ENCODE measurements at regions of chr6 and their contacts with region 1.

Region 1: GRCh38 chr6:90049295-90049694 is 155.0 kb downstream of the GJA10 start:
- DNase-seq: no peak
- H3K4me3 Mint-ChIP-seq: no peak overlapping the region
- H3K27ac Mint-ChIP-seq: peak overlapping the region; percentile 76
- H3K4me1 Mint-ChIP-seq: peaks cover 26% of the 10 kb centered on the region
- H3K27me3 Mint-ChIP-seq: no peaks in the 10 kb centered on the region

Region 2: DNA sequence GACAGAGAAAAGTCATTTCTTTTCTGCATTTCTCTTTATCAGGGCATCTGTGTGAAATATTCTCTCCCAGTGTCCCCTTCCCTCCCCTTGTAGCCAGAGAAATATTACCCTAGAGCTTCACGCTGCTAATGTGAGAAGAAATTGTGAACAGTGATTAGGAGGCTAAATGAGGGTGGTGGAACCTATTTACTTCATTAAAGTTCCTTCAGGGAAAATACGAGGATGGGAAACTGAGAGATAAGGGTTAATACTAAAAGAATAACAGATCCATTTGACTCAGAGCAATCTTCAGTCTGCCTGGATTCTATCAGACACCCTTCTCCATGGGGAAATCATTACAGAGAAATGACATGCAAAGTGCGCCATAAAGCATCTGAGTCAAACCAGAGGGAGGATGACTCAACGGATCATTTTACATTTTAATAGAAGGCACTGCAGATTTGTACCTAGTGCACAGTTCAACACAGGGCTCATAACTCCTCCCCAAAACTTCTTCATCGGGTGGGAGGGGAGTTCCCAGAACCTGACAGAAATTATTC is 23.7 kb before region 1 on chr6:
- intact Hi-C with region 1: loop called (anchors 1 kb)
- DNase-seq: no peak
- H3K4me3 Mint-ChIP-seq: peak overlapping the region; percentile 69
- H3K27ac Mint-ChIP-seq: peak overlapping the region; percentile 95
- H3K4me1 Mint-ChIP-seq: peaks cover 77% of the 10 kb centered on the region
- H3K27me3 Mint-ChIP-seq: no peaks in the 10 kb centered on the region

Region 3: DNA sequence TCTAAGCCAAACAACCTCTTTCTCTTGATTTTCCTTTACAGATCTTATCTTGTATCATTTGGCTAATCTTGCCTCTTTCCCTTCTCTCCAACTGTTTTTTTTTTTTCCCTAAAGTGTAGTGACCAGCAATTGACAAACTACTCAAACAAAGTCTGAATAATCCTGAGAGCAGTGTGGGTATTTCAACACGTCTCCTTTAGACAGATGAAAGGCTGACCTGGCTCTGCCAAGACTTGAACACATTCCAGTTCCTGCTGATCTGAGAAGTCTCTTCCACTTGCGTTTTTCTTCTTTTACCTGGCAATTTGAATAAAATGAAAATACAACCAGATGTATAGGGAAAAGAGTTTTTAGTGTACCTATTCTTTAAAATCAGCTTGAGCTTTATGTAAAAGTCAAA is 13.4 kb after region 1 on chr6:
- intact Hi-C with region 1: loop called (anchors 2 kb)
- DNase-seq: no peak
- H3K4me3 Mint-ChIP-seq: no peak overlapping the region
- H3K27ac Mint-ChIP-seq: no peak overlapping the region
- H3K4me1 Mint-ChIP-seq: peaks cover 34% of the 10 kb centered on the region
- H3K27me3 Mint-ChIP-seq: no peaks in the 10 kb centered on the region

Region 4: GRCh38 chr6:90098001-90098531 is 48.8 kb after region 1 on chr6:
- intact Hi-C with region 1: no loop called
- DNase-seq: no peak
- H3K4me3 Mint-ChIP-seq: no peak overlapping the region
- H3K27ac Mint-ChIP-seq: no peak overlapping the region
- H3K4me1 Mint-ChIP-seq: peaks cover 65% of the 10 kb centered on the region
- H3K27me3 Mint-ChIP-seq: peaks cover 2% of the 10 kb centered on the region